Stomach (tissue), 19 donors: ENCODE measurements at regions of chr11 and their contacts with region 1.

Region 1: GRCh38 chr11:73177778-73178577 is 35.9 kb upstream of the FCHSD2 start:
- DNase-seq: peak; percentile 82 to 93
- H3K4me3 ChIP-seq: no peak overlapping the region
- H3K27ac ChIP-seq: peak overlapping the region in 4 of 5 donors; percentile 26 to 73 (median 52)
- H3K4me1 ChIP-seq: peaks cover 5 to 46% (median 20%) of the 10 kb centered on the region in 4 donors
- H3K27me3 ChIP-seq: no peaks in the 10 kb centered on the region
- CTCF ChIP-seq: peak in 5 of 7 experiments; percentile 53 to 89 (median 80)
- EP300 ChIP-seq: no peak
- POLR2A ChIP-seq: no peak

Region 2: GRCh38 chr11:72831513-72832300 is 346.3 kb before region 1 on chr11:
- intact Hi-C with region 1: loop called (anchors 5 kb)
- DNase-seq: peak; percentile 85 to 92
- H3K4me3 ChIP-seq: no peak overlapping the region
- H3K27ac ChIP-seq: peak overlapping the region in 3 of 5 donors; percentile 3 to 80 (median 29)
- H3K4me1 ChIP-seq: peaks cover 15 to 54% (median 37%) of the 10 kb centered on the region in 4 donors
- H3K27me3 ChIP-seq: no peaks in the 10 kb centered on the region
- CTCF ChIP-seq: peak in 5 of 7 experiments; percentile 77 to 97 (median 93)
- EP300 ChIP-seq: no peak
- POLR2A ChIP-seq: no peak

Region 3: GRCh38 chr11:72924568-72925190 is 253.3 kb before region 1 on chr11:
- intact Hi-C with region 1: loop called (anchors 5 kb)
- DNase-seq: peak in 1 of 2 donors; percentile 56
- H3K4me3 ChIP-seq: no peak overlapping the region
- H3K27ac ChIP-seq: no peak overlapping the region
- H3K4me1 ChIP-seq: peaks cover 0 to 5% (median 0%) of the 10 kb centered on the region in 4 donors
- H3K27me3 ChIP-seq: no peaks in the 10 kb centered on the region
- CTCF ChIP-seq: peak in 5 of 7 experiments; percentile 16 to 78 (median 57)
- EP300 ChIP-seq: no peak
- POLR2A ChIP-seq: no peak

Region 4: DNA sequence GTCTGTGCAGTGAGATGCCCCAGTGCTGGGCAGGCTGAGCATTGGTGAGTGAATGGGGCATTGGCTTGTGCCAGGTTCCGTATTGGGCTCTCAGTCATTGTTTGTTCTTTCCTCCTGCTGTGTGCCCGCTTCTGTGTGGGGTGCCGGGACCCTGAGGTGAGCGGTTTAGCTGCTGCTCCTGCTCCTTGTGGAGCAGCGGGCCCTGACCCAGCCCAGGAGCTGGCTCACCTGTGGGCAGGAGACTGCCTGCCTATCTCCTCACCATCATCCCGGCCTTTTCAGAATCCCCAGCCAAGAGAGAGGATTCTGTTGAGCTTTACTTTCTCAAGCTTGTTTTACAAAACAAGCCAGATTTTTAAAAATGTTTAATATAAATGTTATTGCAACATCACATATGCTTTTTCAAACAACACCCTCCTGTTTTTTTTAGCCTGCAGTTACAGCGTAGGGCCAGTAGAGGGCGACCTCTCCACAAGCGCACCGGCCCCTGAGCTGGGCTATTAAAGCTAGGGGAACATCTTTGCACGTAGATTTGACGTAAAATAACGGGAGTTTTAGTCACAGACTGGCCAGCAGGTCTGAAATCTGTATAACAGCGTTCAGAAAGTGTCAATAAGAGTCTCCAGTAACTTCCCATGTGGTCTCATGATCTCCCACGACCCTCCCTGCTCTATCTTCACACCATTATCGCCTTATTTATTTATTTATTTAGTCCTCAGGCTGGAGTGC is 173.1 kb after region 1 on chr11:
- intact Hi-C with region 1: no loop called
- DNase-seq: peak; percentile 70 to 87
- H3K4me3 ChIP-seq: no peak overlapping the region
- H3K27ac ChIP-seq: peak overlapping the region in 2 of 5 donors; percentile 15 to 65
- H3K4me1 ChIP-seq: peaks cover 0 to 26% (median 10%) of the 10 kb centered on the region in 4 donors
- H3K27me3 ChIP-seq: no peaks in the 10 kb centered on the region
- CTCF ChIP-seq: peak in 5 of 7 experiments; percentile 89 to 96 (median 93)
- EP300 ChIP-seq: no peak
- POLR2A ChIP-seq: no peak